Activated naive CD4-positive, alpha-beta T cell treated with anti-CD3 and anti-CD28 coated beads, Interleukin-2, amount 10 ng/mL, durations not matched to agents 7 days and 5 days (primary cell): ENCODE measurements at regions of chr3 and their contacts with region 1.

Region 1: DNA sequence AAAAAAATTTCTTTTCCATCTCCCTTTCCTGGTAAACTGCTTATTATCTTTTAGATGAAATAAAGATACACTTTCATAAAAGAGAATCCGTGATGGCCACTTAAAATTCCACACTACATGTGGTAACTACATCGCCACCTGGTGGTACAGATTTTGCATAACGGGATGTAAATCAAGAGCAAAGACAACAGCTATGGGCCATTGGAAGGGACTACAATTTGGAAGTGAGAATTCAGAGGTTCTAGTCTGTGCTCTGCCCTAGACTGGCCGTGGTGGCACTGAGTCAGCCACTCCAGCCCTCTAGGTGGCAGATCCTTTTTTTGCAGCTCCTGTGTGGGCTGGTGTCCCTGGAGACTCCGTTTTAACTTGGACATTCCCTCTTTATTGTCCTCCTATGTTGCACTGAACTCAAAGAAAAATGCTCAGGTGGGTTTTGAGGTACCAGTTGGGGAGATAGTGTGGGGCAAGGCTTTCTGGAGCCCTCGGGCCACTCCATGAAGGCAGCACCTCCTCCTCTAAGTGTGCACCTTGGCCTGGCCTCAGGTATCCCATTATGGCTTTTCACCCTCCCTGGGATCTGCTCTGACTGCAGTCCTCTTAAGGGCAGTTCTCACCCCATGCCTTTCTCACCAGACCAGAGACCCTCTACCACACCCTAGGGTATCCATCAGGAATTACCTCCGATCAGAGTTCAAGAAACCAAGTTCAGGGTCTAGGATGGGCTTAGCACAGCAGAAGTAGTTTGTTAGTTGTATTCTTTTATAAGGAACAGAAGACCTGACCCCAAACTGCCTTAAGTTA is 54.9 kb downstream of the SPSB4 start:
- DNase-seq: peak; percentile 74
- H3K4me3 Mint-ChIP-seq: no peak overlapping the region
- H3K27ac Mint-ChIP-seq: no peak overlapping the region
- H3K4me1 Mint-ChIP-seq: no peaks in the 10 kb centered on the region
- H3K27me3 Mint-ChIP-seq: peaks cover 5% of the 10 kb centered on the region

Region 2: DNA sequence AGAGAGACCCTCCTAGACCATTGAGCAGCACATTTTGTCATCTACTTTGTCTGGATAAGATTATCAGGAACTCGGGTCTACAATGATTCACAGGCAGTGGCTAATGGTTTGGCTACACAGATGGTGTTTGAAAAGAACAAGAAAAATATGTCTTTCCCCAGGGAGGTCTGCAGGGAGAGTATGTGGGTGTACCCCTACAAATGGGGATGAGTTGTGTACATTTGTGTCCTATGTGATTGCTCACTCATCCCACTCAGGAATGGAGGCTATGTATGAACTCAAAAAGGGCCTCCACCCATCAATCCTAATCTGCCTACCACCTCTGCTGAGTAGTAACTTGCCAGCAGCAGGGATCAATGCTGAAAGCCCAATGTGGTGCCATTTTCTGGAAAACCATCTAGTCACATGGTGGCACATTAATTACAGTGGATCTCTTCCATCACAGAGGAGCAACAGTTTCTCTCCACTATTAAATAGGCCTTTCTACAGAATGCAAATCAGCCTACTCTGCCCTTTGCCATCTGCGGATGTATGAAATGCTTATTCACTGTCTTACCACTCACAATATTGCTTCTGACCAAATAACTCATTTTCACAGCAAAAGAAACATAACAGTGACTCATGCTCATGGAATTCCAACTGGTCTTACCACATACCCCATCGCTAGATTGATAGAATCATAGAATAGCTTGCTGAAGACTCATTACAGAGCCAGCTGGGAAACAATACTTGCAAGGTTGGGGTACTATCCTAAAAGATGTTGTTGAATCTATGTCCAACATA is 476.5 kb before region 1 on chr3:
- CTCF ChIA-PET with region 1: no interaction called
- DNase-seq: no peak
- H3K4me3 Mint-ChIP-seq: no peak overlapping the region
- H3K27ac Mint-ChIP-seq: no peak overlapping the region
- H3K4me1 Mint-ChIP-seq: no peaks in the 10 kb centered on the region
- H3K27me3 Mint-ChIP-seq: no peaks in the 10 kb centered on the region

Region 3: DNA sequence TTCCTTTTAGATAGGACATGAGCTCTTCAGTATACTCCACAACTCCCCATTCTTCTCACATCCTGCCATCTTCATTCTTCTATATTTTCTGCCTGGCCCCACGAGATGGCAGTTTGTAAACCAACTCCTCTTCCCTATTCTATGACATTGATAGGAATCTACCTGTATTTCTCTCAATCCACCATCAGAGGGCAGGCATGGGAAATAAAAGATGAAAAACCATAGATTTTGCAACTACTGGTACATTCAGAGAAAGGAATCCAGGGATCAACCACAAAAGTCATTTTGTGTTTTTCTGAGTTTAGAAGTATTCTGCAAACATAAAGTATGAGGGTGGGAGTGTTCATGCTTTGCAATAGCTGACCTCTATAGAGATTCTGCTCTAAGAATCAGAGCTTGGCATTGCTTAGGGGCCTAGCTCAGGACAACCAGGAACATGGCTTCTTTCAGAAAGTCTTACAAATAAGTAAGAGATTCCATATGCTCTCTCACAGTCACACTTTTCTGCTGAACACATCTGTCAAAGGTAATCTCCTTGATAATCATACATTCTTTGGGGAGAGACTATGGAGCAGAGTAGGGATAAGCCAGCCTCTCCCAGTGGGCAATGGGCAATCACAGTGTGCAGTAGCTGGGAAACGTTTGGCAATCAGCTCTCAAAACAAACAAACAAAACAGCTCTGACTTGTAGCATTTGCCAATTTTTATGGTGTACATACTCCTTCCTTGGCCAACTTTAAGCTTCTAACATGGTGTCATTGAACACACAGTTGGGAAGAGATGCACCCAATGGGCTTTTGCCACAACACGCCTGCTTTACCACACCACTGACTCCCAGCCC is 207.5 kb before region 1 on chr3:
- CTCF ChIA-PET with region 1: interaction called, 14 read pairs
- DNase-seq: peak; percentile 27
- H3K4me3 Mint-ChIP-seq: no peak overlapping the region
- H3K27ac Mint-ChIP-seq: no peak overlapping the region
- H3K4me1 Mint-ChIP-seq: no peaks in the 10 kb centered on the region
- H3K27me3 Mint-ChIP-seq: peaks cover 10% of the 10 kb centered on the region

Region 4: GRCh38 chr3:141000027-141000663 is 105.9 kb before region 1 on chr3:
- CTCF ChIA-PET with region 1: interaction called, 45 read pairs
- DNase-seq: peak; percentile 61
- H3K4me3 Mint-ChIP-seq: no peak overlapping the region
- H3K27ac Mint-ChIP-seq: no peak overlapping the region
- H3K4me1 Mint-ChIP-seq: peaks cover 5% of the 10 kb centered on the region
- H3K27me3 Mint-ChIP-seq: peaks cover 7% of the 10 kb centered on the region

Region 5: DNA sequence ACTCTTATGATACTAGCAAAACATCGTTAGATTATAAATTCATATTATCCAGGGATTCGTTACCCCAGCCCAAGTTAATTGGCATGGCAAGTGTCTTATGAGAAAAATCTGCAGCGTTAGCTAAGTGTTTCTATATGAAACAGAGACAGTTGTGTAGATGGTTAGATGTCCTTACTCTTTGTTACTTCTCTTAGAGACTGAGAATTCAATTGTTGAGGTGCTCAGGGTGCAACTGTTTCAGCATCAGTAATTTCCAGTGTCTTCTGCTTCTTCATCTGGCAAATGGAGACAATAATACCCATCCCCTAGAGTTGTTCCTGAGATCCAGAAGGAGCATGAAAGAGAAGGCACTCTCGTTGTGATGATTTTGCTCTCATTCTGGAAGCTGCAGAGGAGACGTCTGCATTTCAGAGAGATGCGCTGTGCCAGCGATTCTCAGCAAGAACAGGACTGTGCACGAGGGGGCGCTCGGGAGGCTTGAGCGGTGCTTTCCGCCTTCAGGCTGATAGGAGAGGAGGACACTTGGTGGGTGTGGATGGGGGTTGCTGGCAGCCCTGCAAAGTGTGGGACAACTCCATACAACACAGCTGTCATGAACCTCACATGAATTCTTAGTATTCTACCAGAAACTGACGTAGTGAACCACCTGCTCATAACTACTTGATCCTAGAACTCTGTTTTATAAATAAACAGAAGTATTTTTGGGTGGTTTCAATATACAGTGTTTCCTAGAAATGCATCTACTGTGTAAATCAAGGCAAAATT is 94.6 kb before region 1 on chr3:
- CTCF ChIA-PET with region 1: interaction called, 27 read pairs
- DNase-seq: peak; percentile 85
- H3K4me3 Mint-ChIP-seq: no peak overlapping the region
- H3K27ac Mint-ChIP-seq: no peak overlapping the region
- H3K4me1 Mint-ChIP-seq: no peaks in the 10 kb centered on the region
- H3K27me3 Mint-ChIP-seq: peaks cover 33% of the 10 kb centered on the region